IMR-90 (cell line): ENCODE measurements at regions of chr9 and their contacts with region 1.

Region 1: DNA sequence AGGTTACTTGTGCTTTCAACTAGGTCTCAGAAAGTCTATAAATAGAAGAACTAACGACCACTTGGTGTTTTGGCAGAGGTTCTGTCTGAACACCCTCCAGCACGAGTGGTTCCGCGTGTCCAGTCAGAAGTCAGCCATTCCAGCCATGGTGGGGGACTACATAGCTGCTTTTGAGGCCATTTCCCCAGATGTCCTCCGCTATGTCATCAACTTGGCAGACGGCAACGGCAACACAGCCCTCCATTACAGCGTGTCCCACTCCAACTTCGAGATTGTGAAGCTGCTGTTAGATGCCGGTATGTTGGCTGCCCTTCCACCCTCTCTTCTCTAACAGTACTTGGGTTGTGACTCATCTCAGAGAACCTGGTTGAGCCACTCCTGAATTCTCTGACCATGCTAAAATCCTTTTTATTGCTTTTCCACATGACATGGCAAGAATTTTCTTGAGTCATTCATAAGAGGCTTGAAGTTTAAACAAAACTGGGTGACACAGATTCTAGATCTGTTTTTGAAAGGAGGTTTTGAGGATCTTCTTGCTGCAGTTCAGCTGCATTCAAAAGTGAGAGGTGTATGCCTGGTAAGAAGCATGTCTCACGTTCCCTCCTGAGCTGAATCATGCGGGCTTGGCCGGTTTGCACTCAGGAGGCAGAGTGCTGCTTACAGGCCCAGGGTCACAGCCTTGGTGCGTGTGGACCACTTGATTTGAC is 103.1 kb upstream of the DMRT1 start:
- DNase-seq: peak; percentile 98
- ATAC-seq: peak; percentile 73
- H3K4me3 ChIP-seq: no peak overlapping the region
- H3K27ac ChIP-seq: peak overlapping the region; percentile 79
- H3K4me1 ChIP-seq: peaks cover 17% of the 10 kb centered on the region
- H3K27me3 ChIP-seq: no peaks in the 10 kb centered on the region
- CTCF ChIP-seq: no peak
- POLR2A ChIP-seq: no peak; the same call in 1 of the 2 replicates
- RAD21 ChIP-seq: no peak; the same call in 1 of the 2 replicates

Region 2: DNA sequence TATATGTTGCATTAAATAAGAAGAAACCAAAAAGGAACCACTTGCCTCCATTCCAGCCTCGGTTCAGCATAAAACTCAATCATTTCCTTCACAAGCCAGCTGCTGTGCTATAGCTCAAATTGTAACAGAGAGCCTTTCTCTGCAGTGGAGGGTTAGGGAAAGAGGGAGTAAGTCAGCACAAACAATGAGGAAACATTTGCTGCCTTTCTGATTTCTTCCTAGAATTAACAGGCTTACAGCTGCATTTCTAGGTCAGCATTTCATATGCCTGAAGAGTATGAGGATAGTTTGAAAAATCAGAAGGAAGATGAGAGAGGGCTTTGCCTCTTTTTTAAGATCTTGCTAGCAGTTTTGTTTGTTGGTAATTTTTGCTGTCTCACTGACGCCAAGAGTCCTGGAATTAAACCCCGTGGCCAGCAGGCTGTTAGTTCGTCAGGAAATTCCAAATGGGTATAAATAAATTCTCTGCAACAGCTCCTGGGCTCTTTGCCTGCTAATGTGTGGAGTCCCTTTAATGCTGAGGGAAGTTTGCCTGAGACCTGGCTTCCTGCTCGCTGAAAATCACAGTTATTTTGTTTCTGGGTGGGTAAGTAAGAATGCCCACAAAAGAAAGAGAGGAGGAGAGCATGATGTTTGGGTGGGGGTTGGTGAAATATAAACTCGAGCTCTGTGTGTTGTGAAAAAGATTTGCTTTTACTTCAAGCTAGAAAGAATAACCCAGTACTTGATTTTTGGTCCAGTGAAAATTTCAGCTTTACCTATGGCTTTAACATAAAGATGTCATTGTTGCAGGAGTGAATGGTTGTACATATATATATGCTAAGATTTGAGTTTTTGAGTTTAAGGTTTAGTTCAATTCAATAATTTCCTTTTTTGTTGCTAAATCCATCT is 44.9 kb before region 1 on chr9:
- CTCF ChIA-PET with region 1: interaction called, 8 read pairs
- POLR2A ChIA-PET with region 1: interaction called, 10 read pairs
- dilution Hi-C with region 1: no loop called
- in situ Hi-C with region 1: no loop called
- intact Hi-C with region 1: loop called (anchors 5 kb)
- DNase-seq: peak; percentile 86
- ATAC-seq: peak; percentile 64
- H3K4me3 ChIP-seq: peak overlapping the region; percentile 49; the same call in 1 of the 2 replicates
- H3K27ac ChIP-seq: peak overlapping the region; percentile 95
- H3K4me1 ChIP-seq: peaks cover 34% of the 10 kb centered on the region
- H3K27me3 ChIP-seq: no peaks in the 10 kb centered on the region
- CTCF ChIP-seq: no peak
- POLR2A ChIP-seq: peak; percentile 69
- RAD21 ChIP-seq: no peak

Region 3: GRCh38 chr9:706606-707459 is 31.5 kb before region 1 on chr9:
- CTCF ChIA-PET with region 1: no interaction called
- POLR2A ChIA-PET with region 1: no interaction called
- dilution Hi-C with region 1: no loop called
- in situ Hi-C with region 1: no loop called
- intact Hi-C with region 1: loop called (anchors 2 kb)
- DNase-seq: peak; percentile 75
- ATAC-seq: peak; percentile 92
- H3K4me3 ChIP-seq: peak overlapping the region; percentile 58
- H3K27ac ChIP-seq: peak overlapping the region; percentile 98
- H3K4me1 ChIP-seq: peaks cover 8% of the 10 kb centered on the region
- H3K27me3 ChIP-seq: no peaks in the 10 kb centered on the region
- CTCF ChIP-seq: no peak
- POLR2A ChIP-seq: no peak
- RAD21 ChIP-seq: no peak; the same call in 1 of the 2 replicates

Region 4: GRCh38 chr9:751137-752051 is 13.0 kb after region 1 on chr9:
- CTCF ChIA-PET with region 1: interaction called, 6 read pairs
- POLR2A ChIA-PET with region 1: interaction called, 5 read pairs
- dilution Hi-C with region 1: no loop called
- in situ Hi-C with region 1: no loop called
- intact Hi-C with region 1: loop called (anchors 2 kb)
- DNase-seq: peak; percentile 15
- ATAC-seq: peak; percentile 40
- H3K4me3 ChIP-seq: no peak overlapping the region
- H3K27ac ChIP-seq: peak overlapping the region; percentile 87
- H3K4me1 ChIP-seq: peaks cover 20% of the 10 kb centered on the region
- H3K27me3 ChIP-seq: no peaks in the 10 kb centered on the region
- CTCF ChIP-seq: no peak
- POLR2A ChIP-seq: no peak
- RAD21 ChIP-seq: no peak

Region 5: GRCh38 chr9:2109069-2109650 is 1370.8 kb after region 1 on chr9:
- CTCF ChIA-PET with region 1: no interaction called
- POLR2A ChIA-PET with region 1: no interaction called
- dilution Hi-C with region 1: no loop called
- in situ Hi-C with region 1: no loop called
- intact Hi-C with region 1: loop called (anchors 5 kb)
- DNase-seq: peak; percentile 32
- ATAC-seq: peak; percentile 71
- H3K4me3 ChIP-seq: no peak overlapping the region
- H3K27ac ChIP-seq: no peak overlapping the region
- H3K4me1 ChIP-seq: 0 out of 2 replicates have a peak, but pooled peaks cover 2% of the 10 kb centered on the region
- H3K27me3 ChIP-seq: no peaks in the 10 kb centered on the region
- CTCF ChIP-seq: no peak
- POLR2A ChIP-seq: no peak
- RAD21 ChIP-seq: no peak